Sigmoid colon (tissue), 7 donors: ENCODE measurements at regions of chr3 and their contacts with region 1.

Region 1: DNA sequence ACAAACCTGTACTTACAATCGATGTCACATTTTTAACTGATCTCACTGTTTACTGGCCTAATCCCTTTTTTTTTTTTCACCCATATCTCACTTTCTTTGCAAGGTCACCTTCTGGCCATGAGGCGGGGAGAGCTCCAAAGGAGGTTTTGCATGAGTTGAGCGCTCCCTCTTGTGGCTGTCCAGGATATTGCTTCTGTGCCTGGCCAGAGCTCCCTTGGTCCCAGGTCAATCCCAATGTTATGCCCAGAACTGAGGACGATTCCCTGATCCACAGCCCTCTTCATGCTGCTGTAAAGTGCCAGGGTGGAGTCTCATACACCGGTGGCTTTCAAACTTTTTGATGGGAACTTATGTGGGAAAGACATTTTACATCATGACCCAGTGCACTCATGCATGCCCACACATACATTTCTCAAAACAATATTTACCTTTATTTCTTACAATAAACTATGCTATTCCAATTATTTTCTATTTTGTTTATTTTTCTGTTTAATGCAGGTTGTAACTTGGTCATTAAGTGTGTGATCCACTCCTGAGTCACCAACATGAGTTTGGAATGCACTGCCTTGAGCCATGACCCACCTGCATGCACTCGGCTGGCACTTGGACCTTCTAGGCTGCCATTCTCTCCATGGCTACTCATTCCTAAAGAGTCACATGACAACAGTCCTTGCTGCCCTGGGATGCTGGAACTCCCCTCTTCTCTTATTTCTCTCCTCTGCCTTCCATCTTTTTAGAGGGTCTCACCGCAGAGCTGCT is 9.6 kb upstream of the SST start:
- DNase-seq: peak; percentile 81
- H3K4me3 ChIP-seq: no peak overlapping the region
- H3K27ac ChIP-seq: no peak overlapping the region
- H3K4me1 ChIP-seq: peaks cover 0 to 22% (median 2%) of the 10 kb centered on the region in 4 donors
- H3K27me3 ChIP-seq: no peaks in the 10 kb centered on the region
- CTCF ChIP-seq: peak; percentile 90 to 94 (median 92)
- EP300 ChIP-seq: no peak
- POLR2A ChIP-seq: no peak

Region 2: GRCh38 chr3:187112934-187113793 is 566.7 kb before region 1 on chr3:
- intact Hi-C with region 1: loop called (anchors 10 kb)
- DNase-seq: no peak
- H3K4me3 ChIP-seq: no peak overlapping the region
- H3K27ac ChIP-seq: no peak overlapping the region
- H3K4me1 ChIP-seq: no peaks in the 10 kb centered on the region
- H3K27me3 ChIP-seq: no peaks in the 10 kb centered on the region
- CTCF ChIP-seq: peak in 3 of 4 experiments; percentile 36 to 50 (median 41)
- EP300 ChIP-seq: no peak
- POLR2A ChIP-seq: no peak

Region 3: DNA sequence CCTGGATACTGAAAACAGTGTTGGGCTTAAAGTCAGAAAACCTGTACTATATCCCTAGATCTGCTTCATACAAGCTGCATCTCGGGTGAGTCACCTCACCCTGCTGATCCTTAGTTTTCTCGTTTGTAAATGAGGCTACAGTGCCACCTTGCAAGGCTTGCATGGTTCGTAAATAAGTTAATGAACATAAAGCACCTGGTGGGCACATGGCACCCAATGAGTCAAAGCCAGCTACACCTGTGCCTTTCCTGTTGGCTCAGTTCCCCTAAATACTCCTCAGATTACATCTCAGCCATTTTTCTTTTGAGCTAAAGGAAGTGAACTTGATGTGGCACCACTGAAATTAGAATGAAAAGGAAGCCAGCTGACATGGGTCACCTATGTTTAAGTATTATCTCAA is 456.0 kb before region 1 on chr3:
- intact Hi-C with region 1: loop called (anchors 1 kb)
- DNase-seq: no peak
- H3K4me3 ChIP-seq: no peak overlapping the region
- H3K27ac ChIP-seq: no peak overlapping the region
- H3K4me1 ChIP-seq: peaks cover 0 to 28% (median 12%) of the 10 kb centered on the region in 4 donors
- H3K27me3 ChIP-seq: no peaks in the 10 kb centered on the region
- CTCF ChIP-seq: no peak
- EP300 ChIP-seq: no peak
- POLR2A ChIP-seq: no peak

Region 4: DNA sequence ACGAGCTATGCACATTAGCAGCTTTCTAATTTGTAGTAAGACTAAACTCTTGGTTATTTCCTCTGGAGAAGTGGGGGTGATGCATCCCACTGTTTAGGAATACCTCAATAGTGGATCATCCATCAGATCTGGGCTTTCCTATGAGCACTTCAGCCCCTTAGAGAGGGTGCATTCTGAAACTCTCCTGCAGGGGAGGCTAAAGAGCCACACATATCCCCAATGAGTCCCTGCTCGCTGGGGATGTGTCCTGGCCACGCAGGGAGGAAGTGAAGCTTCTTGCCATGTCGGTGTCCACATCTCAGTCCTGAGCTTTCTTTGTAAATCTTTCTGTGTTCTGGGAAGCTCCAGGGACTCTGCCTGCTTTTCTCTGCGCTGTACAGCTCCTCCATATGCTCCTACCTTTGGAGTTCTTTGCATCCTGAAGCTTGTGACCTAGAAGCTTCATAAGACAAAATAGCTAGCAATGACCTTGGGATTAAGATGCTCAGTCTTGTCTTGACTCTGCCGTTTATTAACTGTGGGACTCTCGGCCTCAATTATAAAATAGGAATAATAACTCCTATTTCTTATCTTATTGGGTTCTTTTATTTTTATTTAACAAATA is 360.0 kb before region 1 on chr3:
- intact Hi-C with region 1: loop called (anchors 1 kb)
- DNase-seq: peak; percentile 81
- H3K4me3 ChIP-seq: no peak overlapping the region
- H3K27ac ChIP-seq: no peak overlapping the region
- H3K4me1 ChIP-seq: peaks cover 0 to 15% (median 10%) of the 10 kb centered on the region in 4 donors
- H3K27me3 ChIP-seq: no peaks in the 10 kb centered on the region
- CTCF ChIP-seq: peak; percentile 70 to 98 (median 90)
- EP300 ChIP-seq: no peak
- POLR2A ChIP-seq: no peak